ENCODE measurements at regions of chr2 and their contacts with region 1.

Region 1: DNA sequence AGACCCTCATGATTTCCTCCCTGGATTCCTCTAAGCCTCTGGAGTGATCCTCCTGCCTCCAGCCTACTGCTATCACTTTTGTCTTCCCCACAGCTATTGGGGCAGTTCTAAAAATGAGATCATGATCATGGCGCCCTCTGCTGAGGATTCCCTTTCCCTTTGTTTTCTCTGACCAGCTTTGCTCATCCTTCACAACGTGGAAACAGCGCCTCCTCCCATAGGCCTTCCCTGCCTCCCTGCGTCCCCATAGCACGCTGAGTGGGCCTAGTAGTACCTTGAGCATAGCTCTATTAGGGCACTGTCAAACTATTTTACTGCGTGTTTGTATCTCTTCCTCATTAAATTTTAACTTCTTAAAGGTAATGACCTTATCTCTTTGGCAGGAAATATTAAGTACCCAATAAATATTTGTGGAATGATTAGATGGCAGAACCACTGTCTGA is 207.0 kb upstream of the FANCL start:
- DNase-seq: peak; percentile 76
- H3K4me3 Mint-ChIP-seq: no peak overlapping the region
- H3K27ac Mint-ChIP-seq: peak overlapping the region; percentile 5
- H3K4me1 Mint-ChIP-seq: peaks cover 25% of the 10 kb centered on the region
- H3K27me3 Mint-ChIP-seq: no peaks in the 10 kb centered on the region
- CTCF ChIP-seq: peak; percentile 67

Region 2: DNA sequence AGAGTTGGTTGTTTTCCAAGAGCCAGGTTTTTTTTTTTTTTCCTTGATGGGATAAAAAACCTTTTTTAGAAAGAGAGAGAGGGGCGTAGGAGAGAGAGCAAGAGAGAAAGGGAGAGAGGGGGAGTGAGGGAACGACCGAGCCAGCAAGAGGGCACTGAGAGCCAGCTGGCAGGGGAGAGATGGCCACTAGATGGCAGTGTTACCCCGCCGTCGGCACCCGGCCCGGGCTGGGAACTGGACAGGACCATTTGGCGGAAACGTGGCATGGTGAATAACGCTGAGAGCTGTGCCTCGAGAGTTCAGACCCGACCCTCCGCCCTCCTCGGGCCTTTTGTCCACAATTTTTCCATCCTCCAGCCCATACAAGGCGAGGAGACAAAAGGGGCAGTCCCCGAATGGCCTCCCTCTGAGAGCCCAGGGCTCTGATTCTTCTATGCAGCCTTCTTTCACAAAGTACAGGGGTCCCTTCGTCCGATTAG is 688.2 kb before region 1 on chr2:
- CTCF ChIA-PET with region 1: interaction called, 35 read pairs
- intact Hi-C with region 1: loop called (anchors 1 kb)
- DNase-seq: peak; percentile 95
- H3K4me3 Mint-ChIP-seq: peak overlapping the region; percentile 63
- H3K27ac Mint-ChIP-seq: peak overlapping the region; percentile 72
- H3K4me1 Mint-ChIP-seq: peaks cover 22% of the 10 kb centered on the region
- H3K27me3 Mint-ChIP-seq: no peaks in the 10 kb centered on the region
- CTCF ChIP-seq: peak; percentile 92

Region 3: GRCh38 chr2:58131191-58132011 is 316.7 kb before region 1 on chr2:
- CTCF ChIA-PET with region 1: no interaction called
- intact Hi-C with region 1: loop called (anchors 5 kb)
- DNase-seq: no peak
- H3K4me3 Mint-ChIP-seq: no peak overlapping the region
- H3K27ac Mint-ChIP-seq: no peak overlapping the region
- H3K4me1 Mint-ChIP-seq: no peaks in the 10 kb centered on the region
- H3K27me3 Mint-ChIP-seq: no peaks in the 10 kb centered on the region
- CTCF ChIP-seq: no peak

Region 4: GRCh38 chr2:58387705-58388104 is 60.4 kb before region 1 on chr2:
- CTCF ChIA-PET with region 1: no interaction called
- intact Hi-C with region 1: no loop called
- DNase-seq: no peak
- H3K4me3 Mint-ChIP-seq: no peak overlapping the region
- H3K27ac Mint-ChIP-seq: no peak overlapping the region
- H3K4me1 Mint-ChIP-seq: no peaks in the 10 kb centered on the region
- H3K27me3 Mint-ChIP-seq: no peaks in the 10 kb centered on the region
- CTCF ChIP-seq: no peak

Region 5: GRCh38 chr2:58553937-58554336 is 105.9 kb after region 1 on chr2:
- CTCF ChIA-PET with region 1: interaction called, 16 read pairs
- intact Hi-C with region 1: loop called (anchors 1 kb)
- DNase-seq: peak; percentile 34
- H3K4me3 Mint-ChIP-seq: no peak overlapping the region
- H3K27ac Mint-ChIP-seq: no peak overlapping the region
- H3K4me1 Mint-ChIP-seq: no peaks in the 10 kb centered on the region
- H3K27me3 Mint-ChIP-seq: no peaks in the 10 kb centered on the region
- CTCF ChIP-seq: no peak

Region 6: GRCh38 chr2:59182249-59182648 is 734.2 kb after region 1 on chr2:
- CTCF ChIA-PET with region 1: interaction called, 3 read pairs
- intact Hi-C with region 1: loop called (anchors 5 kb)
- DNase-seq: peak; percentile 25
- H3K4me3 Mint-ChIP-seq: no peak overlapping the region
- H3K27ac Mint-ChIP-seq: no peak overlapping the region
- H3K4me1 Mint-ChIP-seq: no peaks in the 10 kb centered on the region
- H3K27me3 Mint-ChIP-seq: peaks cover 16% of the 10 kb centered on the region
- CTCF ChIP-seq: peak; percentile 38